B cell (primary cell): ENCODE measurements at regions of chr7 and their contacts with region 1.

Region 1: GRCh38 chr7:77415823-77416622 is at the start of gene GSAP:
- DNase-seq: peak; percentile 86
- ATAC-seq: peak; percentile 60
- H3K4me3 ChIP-seq: peak within 1 kb of the TSS; percentile 71 to 83 (median 77)
- H3K4me3 Mint-ChIP-seq: peak within 1 kb of the TSS; percentile 82
- H3K27ac ChIP-seq: peak within 1 kb of the TSS; percentile 94 to 96
- H3K27ac Mint-ChIP-seq: peak within 1 kb of the TSS; percentile 93
- H3K4me1 ChIP-seq: peaks cover 39 to 42% of the 10 kb centered on the region in 2 donors
- H3K4me1 Mint-ChIP-seq: peaks cover 60% of the 10 kb centered on the region
- H3K27me3 ChIP-seq: no peaks in the 10 kb centered on the region
- H3K27me3 Mint-ChIP-seq: no peaks in the 10 kb centered on the region
- CTCF ChIP-seq: peak; percentile 16
- total RNA-seq, gene GSAP: 200 and 207 TPM in 2 replicates

Region 2: DNA sequence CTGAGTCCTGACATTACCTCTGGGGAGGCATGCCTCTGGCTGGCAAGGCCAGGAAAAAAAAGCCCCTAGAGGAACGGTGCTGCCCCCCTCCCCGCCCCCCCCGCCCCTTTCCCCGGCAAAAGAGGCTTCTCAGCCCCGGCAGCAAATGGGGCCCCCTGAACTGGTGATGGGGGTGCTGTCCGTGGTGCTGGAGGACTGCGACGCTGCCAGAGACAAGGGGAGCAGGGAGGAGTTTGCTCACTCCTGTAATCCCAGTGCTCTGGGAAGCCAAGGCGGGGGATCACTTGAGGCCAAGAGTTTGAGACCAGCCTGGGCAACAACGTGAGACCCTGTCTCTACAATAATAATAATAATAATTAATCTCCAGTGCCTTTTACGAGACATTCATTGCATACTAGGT is 1190.6 kb before region 1 on chr7:
- CTCF ChIA-PET with region 1: no interaction called
- POLR2A ChIA-PET with region 1: no interaction called
- intact Hi-C with region 1: no loop called
- DNase-seq: no peak
- ATAC-seq: no peak
- H3K4me3 ChIP-seq: no peak overlapping the region
- H3K4me3 Mint-ChIP-seq: no peak overlapping the region
- H3K27ac ChIP-seq: no peak overlapping the region
- H3K27ac Mint-ChIP-seq: no peak overlapping the region
- H3K4me1 ChIP-seq: no peaks in the 10 kb centered on the region
- H3K4me1 Mint-ChIP-seq: no peaks in the 10 kb centered on the region
- H3K27me3 ChIP-seq: peaks cover 0 to 22% (median 0%) of the 10 kb centered on the region in 4 experiments
- H3K27me3 Mint-ChIP-seq: peaks cover 44% of the 10 kb centered on the region
- CTCF ChIP-seq: no peak

Region 3: GRCh38 chr7:77331938-77332695 is 83.9 kb before region 1 on chr7:
- CTCF ChIA-PET with region 1: interaction called, 9 read pairs
- POLR2A ChIA-PET with region 1: interaction called, 5 read pairs
- intact Hi-C with region 1: loop called (anchors 10 kb)
- DNase-seq: peak; percentile 80
- ATAC-seq: peak; percentile 70
- H3K4me3 ChIP-seq: no peak overlapping the region
- H3K4me3 Mint-ChIP-seq: peak overlapping the region; percentile 38
- H3K27ac ChIP-seq: no peak overlapping the region
- H3K27ac Mint-ChIP-seq: peak overlapping the region; percentile 83
- H3K4me1 ChIP-seq: peaks cover 51 to 52% of the 10 kb centered on the region in 2 donors
- H3K4me1 Mint-ChIP-seq: peaks cover 49% of the 10 kb centered on the region
- H3K27me3 ChIP-seq: no peaks in the 10 kb centered on the region
- H3K27me3 Mint-ChIP-seq: no peaks in the 10 kb centered on the region
- CTCF ChIP-seq: peak; percentile 75

Region 4: DNA sequence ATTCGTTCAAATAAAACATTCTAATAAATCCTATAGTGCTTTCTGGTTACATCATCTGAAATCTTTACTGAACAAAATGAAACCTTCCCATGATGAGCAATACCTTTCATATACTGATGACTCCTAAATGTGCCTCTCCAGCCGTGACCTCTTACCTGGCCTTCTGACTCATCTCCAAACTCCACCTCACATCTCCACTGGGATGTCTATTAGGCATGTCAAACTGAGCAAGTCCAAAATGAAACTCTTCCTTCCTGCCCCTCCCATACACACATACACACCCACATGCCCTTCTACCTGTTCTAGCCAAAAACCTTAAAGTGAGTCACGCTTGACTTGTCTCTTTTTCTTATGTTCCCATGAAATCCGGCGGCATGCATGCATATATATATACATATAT is 22.8 kb before region 1 on chr7:
- CTCF ChIA-PET with region 1: interaction called, 8 read pairs
- POLR2A ChIA-PET with region 1: interaction called, 23 read pairs
- intact Hi-C with region 1: loop called (anchors 1 kb)
- DNase-seq: peak; percentile 15
- ATAC-seq: peak; percentile 56
- H3K4me3 ChIP-seq: no peak overlapping the region
- H3K4me3 Mint-ChIP-seq: peak overlapping the region; percentile 9
- H3K27ac ChIP-seq: peak overlapping the region in 1 of 2 donors; percentile 85
- H3K27ac Mint-ChIP-seq: peak overlapping the region; percentile 92
- H3K4me1 ChIP-seq: peaks cover 22 to 33% of the 10 kb centered on the region in 2 donors
- H3K4me1 Mint-ChIP-seq: peaks cover 40% of the 10 kb centered on the region
- H3K27me3 ChIP-seq: no peaks in the 10 kb centered on the region
- H3K27me3 Mint-ChIP-seq: no peaks in the 10 kb centered on the region
- CTCF ChIP-seq: no peak

Region 5: GRCh38 chr7:77536413-77537135 is 120.6 kb after region 1 on chr7:
- CTCF ChIA-PET with region 1: interaction called, 7 read pairs
- POLR2A ChIA-PET with region 1: interaction called, 9 read pairs
- intact Hi-C with region 1: loop called (anchors 1 kb)
- DNase-seq: peak; percentile 96
- ATAC-seq: peak; percentile 89
- H3K4me3 ChIP-seq: peak overlapping the region; percentile 88 to 96 (median 95)
- H3K4me3 Mint-ChIP-seq: peak overlapping the region; percentile 99
- H3K27ac ChIP-seq: peak overlapping the region; percentile 75 to 81
- H3K27ac Mint-ChIP-seq: peak overlapping the region; percentile 98
- H3K4me1 ChIP-seq: peaks cover 8 to 28% of the 10 kb centered on the region in 2 donors
- H3K4me1 Mint-ChIP-seq: peaks cover 27% of the 10 kb centered on the region
- H3K27me3 ChIP-seq: no peaks in the 10 kb centered on the region
- H3K27me3 Mint-ChIP-seq: no peaks in the 10 kb centered on the region
- CTCF ChIP-seq: no peak

Region 6: GRCh38 chr7:77580762-77581350 is 164.8 kb after region 1 on chr7:
- CTCF ChIA-PET with region 1: no interaction called
- POLR2A ChIA-PET with region 1: no interaction called
- intact Hi-C with region 1: no loop called
- DNase-seq: no peak
- ATAC-seq: no peak
- H3K4me3 ChIP-seq: no peak overlapping the region
- H3K4me3 Mint-ChIP-seq: no peak overlapping the region
- H3K27ac ChIP-seq: no peak overlapping the region
- H3K27ac Mint-ChIP-seq: no peak overlapping the region
- H3K4me1 ChIP-seq: no peaks in the 10 kb centered on the region
- H3K4me1 Mint-ChIP-seq: no peaks in the 10 kb centered on the region
- H3K27me3 ChIP-seq: no peaks in the 10 kb centered on the region
- H3K27me3 Mint-ChIP-seq: no peaks in the 10 kb centered on the region
- CTCF ChIP-seq: no peak

Region 7: DNA sequence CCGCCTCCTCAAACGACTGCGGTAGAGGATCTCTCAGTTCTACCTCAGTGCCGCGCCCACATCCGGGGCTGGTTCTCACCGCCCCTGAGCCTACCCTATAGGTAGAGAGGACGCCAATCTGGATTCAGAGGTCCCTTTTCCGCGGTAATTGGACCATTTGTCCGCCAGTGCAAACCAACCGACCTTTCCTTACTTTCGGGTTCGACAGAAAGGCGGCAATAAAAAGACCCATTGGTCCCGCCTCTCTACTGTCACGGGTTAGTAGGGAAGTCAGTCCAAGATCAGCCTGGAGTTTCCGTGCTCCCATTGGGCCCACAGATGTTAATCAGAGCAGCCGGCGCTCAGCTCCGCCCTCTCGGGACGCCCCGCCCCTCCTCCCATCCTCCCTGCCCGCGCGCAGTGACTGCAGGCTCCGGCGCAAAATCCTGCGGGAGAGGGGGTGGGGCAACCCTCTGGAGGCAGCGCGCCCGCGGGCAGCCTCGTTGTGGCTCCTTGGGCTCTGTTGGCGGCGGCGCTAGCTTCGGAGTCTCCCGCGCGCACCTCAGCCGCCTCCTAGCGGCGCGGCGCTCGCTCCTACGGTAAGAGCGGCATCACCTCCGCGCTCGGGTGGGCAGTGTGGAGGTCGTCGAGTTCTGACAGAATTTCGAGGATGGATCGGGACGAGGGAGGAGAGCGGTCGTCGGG is 382.5 kb after region 1 on chr7 and contains the starts of genes PHTF2 and TMEM60:
- CTCF ChIA-PET with region 1: no interaction called
- POLR2A ChIA-PET with region 1: no interaction called
- intact Hi-C with region 1: loop called (anchors 1 kb)
- DNase-seq: peak; percentile 97
- ATAC-seq: peak; percentile 86
- H3K4me3 ChIP-seq: peak within 1 kb of the TSS; percentile 79 to 97 (median 91)
- H3K4me3 Mint-ChIP-seq: peak within 1 kb of the TSS; percentile 91
- H3K27ac ChIP-seq: peak within 1 kb of the TSS; percentile 77 to 87
- H3K27ac Mint-ChIP-seq: peak within 1 kb of the TSS; percentile 92
- H3K4me1 ChIP-seq: peaks cover 46 to 49% of the 10 kb centered on the region in 2 donors
- H3K4me1 Mint-ChIP-seq: peaks cover 79% of the 10 kb centered on the region
- H3K27me3 ChIP-seq: no peaks in the 10 kb centered on the region
- H3K27me3 Mint-ChIP-seq: no peaks in the 10 kb centered on the region
- CTCF ChIP-seq: peak; percentile 74
- total RNA-seq, gene PHTF2: 44.8 and 49.6 TPM in 2 replicates
- total RNA-seq, gene TMEM60: 18.9 and 20.4 TPM in 2 replicates